Endothelial cell of umbilical vein (primary cell): ENCODE measurements at regions of chr5 and their contacts with region 1.

Region 1: DNA sequence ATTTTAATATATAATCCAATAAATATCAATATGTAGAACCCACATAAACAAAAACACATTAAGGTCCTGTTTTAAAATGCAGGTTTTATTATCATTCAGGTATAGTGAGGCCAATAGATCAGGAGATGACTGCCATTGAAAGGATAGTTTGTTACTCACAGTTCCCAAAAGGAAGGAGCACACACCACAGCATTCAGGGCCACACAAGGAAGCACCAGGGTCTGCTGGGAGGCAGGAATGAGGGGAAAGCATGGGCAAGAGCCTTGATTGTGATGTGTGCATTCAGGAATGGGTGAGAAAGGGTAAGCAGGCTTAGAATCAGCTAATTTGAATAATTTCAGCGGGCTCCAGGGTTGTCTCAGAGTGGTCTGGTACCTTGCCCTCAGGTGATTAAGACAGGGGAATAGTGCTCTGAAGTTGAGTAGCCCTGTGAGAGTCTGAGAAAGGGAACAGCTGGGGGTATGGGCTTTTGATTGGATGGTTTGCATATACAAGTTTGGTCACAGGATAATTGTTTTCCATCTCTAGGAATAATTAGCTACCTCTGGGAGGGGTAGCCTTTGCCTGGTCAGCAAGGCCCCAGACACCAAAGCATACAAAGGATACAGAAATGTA is 19.8 kb upstream of the OTULIN start:
- DNase-seq: no peak
- H3K4me3 ChIP-seq: no peak overlapping the region
- H3K27ac ChIP-seq: no peak overlapping the region
- H3K4me1 ChIP-seq: no peaks in the 10 kb centered on the region
- H3K27me3 ChIP-seq: peaks cover 20 to 30% of the 10 kb centered on the region in 2 experiments
- CTCF ChIP-seq: no peak
- POLR2A ChIP-seq: no peak

Region 2: GRCh38 chr5:13976867-13977830 is 667.6 kb before region 1 on chr5:
- CTCF ChIA-PET with region 1: interaction called, 55 read pairs
- POLR2A ChIA-PET with region 1: no interaction called
- dilution Hi-C with region 1: no loop called
- intact Hi-C with region 1: loop called (anchors 1 kb)
- DNase-seq: peak; percentile 36
- H3K4me3 ChIP-seq: no peak overlapping the region
- H3K27ac ChIP-seq: no peak overlapping the region
- H3K4me1 ChIP-seq: no peaks in the 10 kb centered on the region
- H3K27me3 ChIP-seq: peaks cover 3 to 15% of the 10 kb centered on the region in 2 experiments
- CTCF ChIP-seq: peak; percentile 40 to 41
- POLR2A ChIP-seq: no peak

Region 3: GRCh38 chr5:14357851-14358250 is 286.9 kb before region 1 on chr5:
- CTCF ChIA-PET with region 1: interaction called, 36 read pairs
- POLR2A ChIA-PET with region 1: no interaction called
- dilution Hi-C with region 1: no loop called
- intact Hi-C with region 1: no loop called
- DNase-seq: no peak
- H3K4me3 ChIP-seq: no peak overlapping the region
- H3K27ac ChIP-seq: no peak overlapping the region
- H3K4me1 ChIP-seq: peaks cover 29% of the 10 kb centered on the region
- H3K27me3 ChIP-seq: no peaks in the 10 kb centered on the region
- CTCF ChIP-seq: no peak
- POLR2A ChIP-seq: no peak

Region 4: GRCh38 chr5:14383923-14384322 is 260.8 kb before region 1 on chr5:
- CTCF ChIA-PET with region 1: interaction called, 22 read pairs
- POLR2A ChIA-PET with region 1: no interaction called
- dilution Hi-C with region 1: loop called (anchors 25 kb)
- intact Hi-C with region 1: no loop called
- DNase-seq: no peak
- H3K4me3 ChIP-seq: no peak overlapping the region
- H3K27ac ChIP-seq: no peak overlapping the region
- H3K4me1 ChIP-seq: no peaks in the 10 kb centered on the region
- H3K27me3 ChIP-seq: no peaks in the 10 kb centered on the region
- CTCF ChIP-seq: no peak
- POLR2A ChIP-seq: no peak

Region 5: GRCh38 chr5:14581333-14581890 is 63.3 kb before region 1 on chr5 and contains the start of gene OTULINL:
- CTCF ChIA-PET with region 1: interaction called, 11 read pairs
- POLR2A ChIA-PET with region 1: no interaction called
- dilution Hi-C with region 1: no loop called
- intact Hi-C with region 1: no loop called
- DNase-seq: peak; percentile 71
- H3K4me3 ChIP-seq: peak within 1 kb of the TSS; percentile 27 to 56 (median 47)
- H3K27ac ChIP-seq: no peak within 1 kb of the TSS
- H3K4me1 ChIP-seq: peaks cover 3% of the 10 kb centered on the region
- H3K27me3 ChIP-seq: peaks cover 30 to 55% of the 10 kb centered on the region in 2 experiments
- CTCF ChIP-seq: no peak
- POLR2A ChIP-seq: no peak
- total RNA-seq, gene OTULINL: 0.37 and 0.42 TPM in 2 replicates

Region 6: GRCh38 chr5:14685757-14686156 is 41.0 kb after region 1 on chr5:
- CTCF ChIA-PET with region 1: interaction called, 14 read pairs
- POLR2A ChIA-PET with region 1: no interaction called
- dilution Hi-C with region 1: no loop called
- intact Hi-C with region 1: no loop called
- DNase-seq: peak; percentile 59
- H3K4me3 ChIP-seq: no peak overlapping the region
- H3K27ac ChIP-seq: no peak overlapping the region
- H3K4me1 ChIP-seq: no peaks in the 10 kb centered on the region
- H3K27me3 ChIP-seq: no peaks in the 10 kb centered on the region
- CTCF ChIP-seq: peak; percentile 53 to 56
- POLR2A ChIP-seq: no peak

Region 7: DNA sequence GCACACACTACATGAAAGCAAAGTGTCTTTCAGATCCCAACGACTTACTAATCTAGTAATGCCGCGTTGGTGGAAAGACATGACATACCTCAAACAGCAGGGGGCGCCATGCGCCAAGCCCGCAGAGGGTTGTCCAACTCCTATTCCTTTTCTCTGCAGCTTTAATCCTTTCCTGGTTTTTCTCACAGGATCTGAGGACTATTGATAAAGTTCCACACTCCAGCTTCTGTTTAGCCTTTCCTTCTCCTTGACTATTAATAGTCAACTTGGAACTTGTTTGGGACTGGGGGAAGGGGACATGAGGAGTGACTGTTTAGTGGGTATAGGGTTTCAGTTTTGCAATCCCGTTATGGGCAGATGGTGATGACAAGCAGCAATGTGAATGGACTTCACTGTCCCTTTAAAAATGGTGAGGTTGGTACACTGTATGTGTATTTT is 82.7 kb after region 1 on chr5:
- CTCF ChIA-PET with region 1: no interaction called
- POLR2A ChIA-PET with region 1: no interaction called
- dilution Hi-C with region 1: no loop called
- intact Hi-C with region 1: no loop called
- DNase-seq: peak; percentile 81
- H3K4me3 ChIP-seq: no peak overlapping the region
- H3K27ac ChIP-seq: no peak overlapping the region
- H3K4me1 ChIP-seq: no peaks in the 10 kb centered on the region
- H3K27me3 ChIP-seq: no peaks in the 10 kb centered on the region
- CTCF ChIP-seq: peak; percentile 88
- POLR2A ChIP-seq: no peak

Region 8: DNA sequence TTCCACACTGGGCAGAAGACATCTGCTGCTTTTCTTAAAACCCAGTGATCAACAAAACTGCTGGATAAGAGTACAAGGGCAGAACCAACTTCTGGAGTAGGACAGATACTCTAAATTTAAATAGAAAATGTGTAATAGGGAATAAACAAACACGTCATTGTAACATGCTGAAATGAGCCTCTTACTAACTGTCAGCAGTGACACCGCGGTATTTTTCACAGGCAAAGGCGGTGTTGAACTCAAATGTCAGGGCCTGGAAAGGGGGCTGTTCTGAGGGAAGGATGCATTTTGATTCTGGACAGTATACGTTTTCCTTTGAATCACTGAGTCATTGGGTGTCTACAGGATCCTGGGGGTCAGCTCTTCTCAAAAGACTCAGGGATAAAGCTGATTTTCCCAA is 93.3 kb after region 1 on chr5:
- CTCF ChIA-PET with region 1: no interaction called
- POLR2A ChIA-PET with region 1: no interaction called
- dilution Hi-C with region 1: no loop called
- intact Hi-C with region 1: no loop called
- DNase-seq: no peak
- H3K4me3 ChIP-seq: no peak overlapping the region
- H3K27ac ChIP-seq: no peak overlapping the region
- H3K4me1 ChIP-seq: peaks cover 13% of the 10 kb centered on the region
- H3K27me3 ChIP-seq: no peaks in the 10 kb centered on the region
- CTCF ChIP-seq: no peak
- POLR2A ChIP-seq: no peak

Region 9: GRCh38 chr5:14790220-14790619 is 145.5 kb after region 1 on chr5:
- CTCF ChIA-PET with region 1: no interaction called
- POLR2A ChIA-PET with region 1: no interaction called
- dilution Hi-C with region 1: no loop called
- intact Hi-C with region 1: no loop called
- DNase-seq: peak; percentile 42
- H3K4me3 ChIP-seq: no peak overlapping the region
- H3K27ac ChIP-seq: no peak overlapping the region
- H3K4me1 ChIP-seq: peaks cover 3% of the 10 kb centered on the region
- H3K27me3 ChIP-seq: no peaks in the 10 kb centered on the region
- CTCF ChIP-seq: no peak
- POLR2A ChIP-seq: no peak